ENCODE measurements at regions of chr7 and their contacts with region 1.

Region 1: DNA sequence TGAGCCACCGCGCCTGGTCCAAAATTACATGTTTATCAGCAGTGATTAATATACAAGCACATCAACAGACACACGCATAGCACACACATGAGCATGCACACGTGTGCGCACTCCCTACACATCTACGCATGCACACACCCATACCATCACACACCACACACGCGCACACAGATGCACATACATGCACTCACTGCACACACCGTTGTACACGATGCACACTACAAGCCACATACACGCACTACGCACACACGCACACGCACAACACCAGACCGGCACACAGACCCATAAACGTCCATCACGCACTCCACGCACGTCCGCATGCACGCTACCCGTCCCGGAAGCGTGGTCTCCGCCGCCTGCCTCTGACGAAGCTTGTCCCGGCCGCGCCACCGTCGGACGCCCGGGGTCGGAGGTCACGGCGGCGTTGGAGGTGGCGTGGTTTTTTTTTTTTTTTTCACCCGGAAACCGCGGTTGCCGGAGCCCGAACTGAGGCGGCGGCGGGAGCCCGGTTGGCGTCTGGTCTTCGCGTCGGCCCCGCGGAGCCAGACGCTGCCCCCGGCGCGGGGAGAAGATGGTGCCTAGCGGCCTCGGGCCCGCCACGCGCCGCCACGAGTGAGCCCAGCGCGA is at the start of gene TMEM248:
- DNase-seq: peak; percentile 84 to 96 (median 91)
- ATAC-seq: peak; percentile 90
- H3K4me3 ChIP-seq: peak within 1 kb of the TSS; percentile 83 to 94
- H3K4me3 Mint-ChIP-seq: peak within 1 kb of the TSS; percentile 98
- H3K27ac ChIP-seq: peak within 1 kb of the TSS; percentile 75 to 80
- H3K27ac Mint-ChIP-seq: peak within 1 kb of the TSS; percentile 97
- H3K4me1 ChIP-seq: peaks cover 20% of the 10 kb centered on the region
- H3K4me1 Mint-ChIP-seq: peaks cover 37% of the 10 kb centered on the region
- H3K27me3 ChIP-seq: no peaks in the 10 kb centered on the region
- H3K27me3 Mint-ChIP-seq: no peaks in the 10 kb centered on the region
- CTCF ChIP-seq: no peak
- total RNA-seq, gene TMEM248: 67.2 to 72.1 TPM

Region 2: GRCh38 chr7:65981965-65982792 is 938.7 kb before region 1 on chr7 and contains the start of gene GUSB:
- CTCF ChIA-PET with region 1: no interaction called
- POLR2A ChIA-PET with region 1: no interaction called
- intact Hi-C with region 1: loop called in 1 of 2 experiments (anchors 5 kb)
- DNase-seq: peak; percentile 80 to 93 (median 90)
- ATAC-seq: peak; percentile 87
- H3K4me3 ChIP-seq: peak within 1 kb of the TSS; percentile 83 to 90
- H3K4me3 Mint-ChIP-seq: peak within 1 kb of the TSS; percentile 85
- H3K27ac ChIP-seq: peak within 1 kb of the TSS; percentile 69 to 73
- H3K27ac Mint-ChIP-seq: peak within 1 kb of the TSS; percentile 88
- H3K4me1 ChIP-seq: peaks cover 18% of the 10 kb centered on the region
- H3K4me1 Mint-ChIP-seq: peaks cover 14% of the 10 kb centered on the region
- H3K27me3 ChIP-seq: no peaks in the 10 kb centered on the region
- H3K27me3 Mint-ChIP-seq: no peaks in the 10 kb centered on the region
- CTCF ChIP-seq: no peak
- total RNA-seq, gene GUSB: 37.0 to 41.8 TPM

Region 3: GRCh38 chr7:66591799-66592596 is 328.9 kb before region 1 on chr7:
- CTCF ChIA-PET with region 1: no interaction called
- POLR2A ChIA-PET with region 1: no interaction called
- intact Hi-C with region 1: loop called in 1 of 2 experiments (anchors 1 kb)
- DNase-seq: peak; percentile 69 to 95 (median 91)
- ATAC-seq: peak; percentile 98
- H3K4me3 ChIP-seq: peak overlapping the region; percentile 73 to 95
- H3K4me3 Mint-ChIP-seq: peak overlapping the region; percentile 99
- H3K27ac ChIP-seq: peak overlapping the region; percentile 67 to 89
- H3K27ac Mint-ChIP-seq: peak overlapping the region; percentile 98
- H3K4me1 ChIP-seq: peaks cover 37% of the 10 kb centered on the region
- H3K4me1 Mint-ChIP-seq: peaks cover 49% of the 10 kb centered on the region
- H3K27me3 ChIP-seq: no peaks in the 10 kb centered on the region
- H3K27me3 Mint-ChIP-seq: no peaks in the 10 kb centered on the region
- CTCF ChIP-seq: no peak

Region 4: GRCh38 chr7:66681491-66682349 is 239.2 kb before region 1 on chr7:
- CTCF ChIA-PET with region 1: no interaction called
- POLR2A ChIA-PET with region 1: no interaction called
- intact Hi-C with region 1: loop called in 1 of 2 experiments (anchors 10 kb)
- DNase-seq: peak; percentile 87 to 98 (median 97)
- ATAC-seq: peak; percentile 93
- H3K4me3 ChIP-seq: peak overlapping the region; percentile 98
- H3K4me3 Mint-ChIP-seq: peak overlapping the region; percentile 93
- H3K27ac ChIP-seq: peak overlapping the region; percentile 99 to 100
- H3K27ac Mint-ChIP-seq: peak overlapping the region; percentile 97
- H3K4me1 ChIP-seq: peaks cover 13% of the 10 kb centered on the region
- H3K4me1 Mint-ChIP-seq: peaks cover 35% of the 10 kb centered on the region
- H3K27me3 ChIP-seq: no peaks in the 10 kb centered on the region
- H3K27me3 Mint-ChIP-seq: no peaks in the 10 kb centered on the region
- CTCF ChIP-seq: no peak

Region 5: DNA sequence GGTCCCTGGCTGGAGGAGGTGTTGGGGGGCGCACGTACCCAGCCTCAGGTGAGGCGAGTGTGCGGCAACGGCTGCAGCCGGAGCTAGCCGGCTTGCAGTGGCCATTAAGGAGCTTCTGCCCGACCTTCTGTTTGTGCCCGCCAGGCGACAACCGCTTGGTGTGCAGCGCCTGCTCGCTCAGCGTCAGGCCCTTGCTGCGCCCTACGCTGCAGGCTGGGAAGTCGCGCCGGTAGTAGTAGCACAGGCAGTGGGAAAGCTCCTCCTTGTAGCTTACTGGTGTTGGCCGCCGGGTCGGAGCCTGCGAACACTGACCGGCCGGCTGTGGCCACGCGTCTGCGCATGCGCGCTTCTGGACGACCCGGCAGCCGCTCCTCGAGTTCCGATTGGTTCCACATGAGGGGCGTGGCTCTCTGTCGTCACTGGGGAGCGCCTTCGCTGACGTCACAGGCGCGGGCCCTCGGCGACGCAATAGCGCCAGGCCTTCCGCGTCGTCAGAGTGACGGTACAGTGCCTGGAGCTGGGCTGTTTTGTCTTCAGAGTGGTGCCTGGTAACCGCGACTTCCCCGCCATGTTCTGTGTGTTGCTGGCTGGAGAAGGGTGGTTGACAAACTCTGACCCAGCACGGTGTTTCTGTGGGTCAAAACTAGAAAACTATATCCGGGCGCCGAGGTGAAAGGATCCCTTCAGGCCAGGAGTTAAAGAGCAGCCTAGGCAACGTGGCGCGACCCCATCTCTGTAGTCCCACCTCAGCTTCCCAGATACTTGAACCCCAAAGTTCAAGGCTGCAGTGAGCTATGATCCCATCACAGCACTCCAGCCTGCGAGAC is 76.1 kb before region 1 on chr7:
- CTCF ChIA-PET with region 1: interaction called, 4 read pairs
- POLR2A ChIA-PET with region 1: interaction called, 31 read pairs
- intact Hi-C with region 1: loop called (anchors 1 kb)
- DNase-seq: peak; percentile 98 to 100 (median 99)
- ATAC-seq: peak; percentile 87
- H3K4me3 ChIP-seq: peak overlapping the region; percentile 90 to 96
- H3K4me3 Mint-ChIP-seq: peak overlapping the region; percentile 97
- H3K27ac ChIP-seq: peak overlapping the region; percentile 97 to 98
- H3K27ac Mint-ChIP-seq: peak overlapping the region; percentile 100
- H3K4me1 ChIP-seq: peaks cover 13% of the 10 kb centered on the region
- H3K4me1 Mint-ChIP-seq: peaks cover 25% of the 10 kb centered on the region
- H3K27me3 ChIP-seq: no peaks in the 10 kb centered on the region
- H3K27me3 Mint-ChIP-seq: no peaks in the 10 kb centered on the region
- CTCF ChIP-seq: peak; percentile 53

Measured in CD8-positive, alpha-beta T cell (primary cell).